Heart left ventricle (tissue), 16 donors: ENCODE measurements at regions of chr5 and their contacts with region 1.

Region 1: DNA sequence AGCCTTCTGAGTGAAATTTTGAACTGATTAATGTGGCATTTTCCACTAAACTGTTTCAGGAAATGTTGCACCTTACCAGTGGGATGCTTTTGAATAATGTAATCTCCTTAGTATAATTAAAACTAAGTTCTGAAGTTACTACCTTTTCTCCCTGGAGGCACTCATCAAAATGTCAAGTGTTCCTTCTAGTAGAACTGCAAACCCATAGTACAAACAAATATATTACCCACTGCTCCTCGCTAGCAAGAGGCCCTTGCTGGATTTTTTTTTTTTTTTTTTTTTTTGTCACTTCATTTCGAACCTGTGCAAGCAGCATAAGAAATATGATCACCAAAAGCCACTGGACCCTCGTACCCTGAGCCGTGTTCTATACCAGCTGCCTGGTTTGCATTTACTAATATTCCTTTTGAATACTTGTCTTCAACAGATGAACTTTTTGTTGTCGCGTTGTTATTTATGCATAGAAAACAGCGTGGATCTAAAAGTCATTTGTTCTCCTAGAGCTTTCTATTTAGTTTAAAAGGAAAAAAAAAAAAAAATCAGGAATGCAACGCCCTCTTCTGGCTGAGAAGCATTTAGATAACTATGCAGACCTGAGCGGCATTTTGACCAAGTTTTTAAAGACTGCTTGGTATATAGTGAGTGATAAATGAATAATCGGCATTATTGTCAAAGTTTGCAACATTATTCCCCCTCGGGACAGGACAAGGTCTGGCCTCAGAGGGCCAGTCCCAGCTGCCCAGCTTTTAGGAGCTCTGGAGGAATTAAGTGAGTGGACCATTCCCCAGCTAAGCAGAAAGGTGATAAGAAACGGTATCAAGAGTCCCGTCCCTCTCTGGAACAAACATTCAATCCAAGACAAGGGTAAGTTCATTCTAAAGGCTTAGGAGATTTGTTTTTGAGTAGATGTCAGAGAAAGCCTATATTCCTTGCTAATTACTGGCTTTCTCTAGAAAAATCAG is 162.5 kb upstream of the KIF2A start:
- DNase-seq: no peak
- ATAC-seq: no peak
- H3K4me3 ChIP-seq: no peak overlapping the region
- H3K27ac ChIP-seq: no peak overlapping the region
- H3K4me1 ChIP-seq: peaks cover 0 to 3% (median 0%) of the 10 kb centered on the region in 12 donors
- H3K27me3 ChIP-seq: peaks cover 0 to 44% (median 5%) of the 10 kb centered on the region in 9 donors
- CTCF ChIP-seq: peak; percentile 6 to 57 (median 36)
- POLR2A ChIP-seq: no peak

Region 2: GRCh38 chr5:60677844-60678664 is 1465.5 kb before region 1 on chr5:
- intact Hi-C with region 1: loop called in 3 of 10 experiments (anchors 10 kb)
- DNase-seq: no peak
- ATAC-seq: no peak
- H3K4me3 ChIP-seq: no peak overlapping the region
- H3K27ac ChIP-seq: no peak overlapping the region
- H3K4me1 ChIP-seq: peaks cover 0 to 5% (median 0%) of the 10 kb centered on the region in 12 donors
- H3K27me3 ChIP-seq: no peaks in the 10 kb centered on the region
- CTCF ChIP-seq: peak in 11 of 12 donors; percentile 20 to 55 (median 46)
- POLR2A ChIP-seq: no peak

Region 3: GRCh38 chr5:60687927-60688720 is 1455.4 kb before region 1 on chr5:
- intact Hi-C with region 1: loop called in 1 of 10 experiments (anchors 10 kb)
- DNase-seq: no peak
- ATAC-seq: no peak
- H3K4me3 ChIP-seq: no peak overlapping the region
- H3K27ac ChIP-seq: no peak overlapping the region
- H3K4me1 ChIP-seq: no peaks in the 10 kb centered on the region
- H3K27me3 ChIP-seq: no peaks in the 10 kb centered on the region
- CTCF ChIP-seq: no peak
- POLR2A ChIP-seq: no peak

Region 4: GRCh38 chr5:61055434-61056006 is 1088.0 kb before region 1 on chr5:
- intact Hi-C with region 1: loop called in 1 of 10 experiments (anchors 10 kb)
- DNase-seq: no peak
- ATAC-seq: no peak
- H3K4me3 ChIP-seq: no peak overlapping the region
- H3K27ac ChIP-seq: no peak overlapping the region
- H3K4me1 ChIP-seq: peaks cover 0 to 3% (median 0%) of the 10 kb centered on the region in 12 donors
- H3K27me3 ChIP-seq: no peaks in the 10 kb centered on the region
- CTCF ChIP-seq: peak; percentile 36 to 69 (median 58)
- POLR2A ChIP-seq: no peak